Heart right ventricle (tissue), 16 donors: ENCODE measurements at regions of chr13 and their contacts with region 1.

Region 1: GRCh38 chr13:105389373-105389772 is 1146.1 kb downstream of the EFNB2 start:
- DNase-seq: no peak
- ATAC-seq: no peak
- H3K4me3 ChIP-seq: no peak overlapping the region
- H3K27ac ChIP-seq: no peak overlapping the region
- H3K4me1 ChIP-seq: no peaks in the 10 kb centered on the region
- H3K27me3 ChIP-seq: no peaks in the 10 kb centered on the region
- CTCF ChIP-seq: no peak

Region 2: DNA sequence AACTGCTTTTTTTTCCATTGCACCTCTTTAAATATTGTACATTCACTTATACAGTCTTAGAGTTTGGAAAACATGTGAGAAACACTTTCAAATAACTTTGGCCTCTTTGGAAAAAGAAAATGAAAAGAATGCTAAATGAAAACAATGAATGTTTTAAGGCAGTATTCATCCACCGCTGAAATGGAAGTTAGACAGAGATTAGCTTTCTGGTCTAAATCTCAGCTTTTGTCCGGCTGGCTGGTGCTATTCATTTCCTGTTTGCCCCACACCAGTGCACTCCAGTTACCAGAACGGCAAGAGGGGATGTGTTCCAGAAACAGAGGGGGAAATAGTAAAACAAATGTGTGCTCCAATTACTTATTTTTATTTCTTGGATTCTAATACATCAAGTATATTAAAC is 55.2 kb before region 1 on chr13:
- intact Hi-C with region 1: no loop called
- DNase-seq: no peak
- ATAC-seq: no peak
- H3K4me3 ChIP-seq: no peak overlapping the region
- H3K27ac ChIP-seq: no peak overlapping the region
- H3K4me1 ChIP-seq: peaks cover 0 to 19% (median 2%) of the 10 kb centered on the region in 9 donors
- H3K27me3 ChIP-seq: no peaks in the 10 kb centered on the region
- CTCF ChIP-seq: no peak

Region 3: GRCh38 chr13:105665284-105665683 is 275.9 kb after region 1 on chr13:
- intact Hi-C with region 1: loop called in 1 of 10 experiments (anchors 5 kb)
- DNase-seq: no peak
- ATAC-seq: no peak
- H3K4me3 ChIP-seq: no peak overlapping the region
- H3K27ac ChIP-seq: no peak overlapping the region
- H3K4me1 ChIP-seq: no peaks in the 10 kb centered on the region
- H3K27me3 ChIP-seq: no peaks in the 10 kb centered on the region
- CTCF ChIP-seq: no peak

Region 4: GRCh38 chr13:106003651-106004050 is 614.3 kb after region 1 on chr13:
- intact Hi-C with region 1: no loop called
- DNase-seq: no peak
- ATAC-seq: no peak
- H3K4me3 ChIP-seq: no peak overlapping the region
- H3K27ac ChIP-seq: no peak overlapping the region
- H3K4me1 ChIP-seq: no peaks in the 10 kb centered on the region
- H3K27me3 ChIP-seq: no peaks in the 10 kb centered on the region
- CTCF ChIP-seq: no peak